Calu3 (cell line): ENCODE measurements at regions of chr7 and their contacts with region 1.

Region 1: DNA sequence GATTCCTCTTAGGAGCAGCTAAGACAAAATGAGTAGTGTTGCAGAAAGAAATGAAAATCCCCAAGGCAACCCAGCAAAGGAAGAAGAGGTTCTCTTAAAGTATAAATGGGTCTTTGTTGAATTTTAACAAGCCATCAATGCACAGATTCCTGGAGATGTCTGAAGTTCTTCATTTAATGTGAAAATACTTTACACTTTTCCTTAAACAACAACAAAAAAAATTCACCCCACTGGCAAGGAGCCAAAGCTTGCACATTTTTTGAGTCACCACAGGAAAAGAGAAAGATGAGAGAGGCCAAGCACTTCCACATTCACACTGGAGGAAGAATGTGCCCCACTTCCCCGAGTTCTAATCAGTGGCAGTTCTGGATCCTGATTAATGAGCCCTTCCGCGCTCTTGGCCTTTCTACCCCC is 286.4 kb upstream of the MEOX2 start:
- DNase-seq: no peak
- H3K4me3 Mint-ChIP-seq: no peak overlapping the region
- H3K27ac Mint-ChIP-seq: no peak overlapping the region
- H3K4me1 Mint-ChIP-seq: no peaks in the 10 kb centered on the region
- H3K27me3 Mint-ChIP-seq: no peaks in the 10 kb centered on the region
- CTCF ChIP-seq: no peak

Region 2: GRCh38 chr7:15836041-15836440 is 136.8 kb before region 1 on chr7:
- CTCF ChIA-PET with region 1: interaction called, 11 read pairs
- intact Hi-C with region 1: no loop called
- DNase-seq: no peak
- H3K4me3 Mint-ChIP-seq: no peak overlapping the region
- H3K27ac Mint-ChIP-seq: no peak overlapping the region
- H3K4me1 Mint-ChIP-seq: peaks cover 9% of the 10 kb centered on the region
- H3K27me3 Mint-ChIP-seq: no peaks in the 10 kb centered on the region
- CTCF ChIP-seq: no peak

Region 3: DNA sequence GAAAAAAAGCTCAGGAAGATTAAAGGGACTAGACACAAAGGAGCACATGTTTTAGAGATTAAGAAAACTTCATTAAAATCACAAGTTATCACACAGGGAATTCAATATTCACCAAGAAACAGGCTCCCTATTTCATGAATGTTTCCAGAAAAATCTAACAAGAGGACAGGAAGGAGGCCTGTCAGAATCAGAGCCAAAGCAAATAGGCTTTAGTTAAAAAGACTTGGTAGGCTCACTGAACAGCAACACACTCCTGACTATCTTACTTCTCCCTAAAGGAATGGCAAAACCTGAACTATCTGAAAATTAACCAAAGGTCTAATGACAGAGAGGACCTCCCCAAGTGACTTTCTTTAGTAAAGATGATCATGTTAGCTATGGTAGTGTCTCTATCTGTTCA is 98.1 kb before region 1 on chr7:
- CTCF ChIA-PET with region 1: no interaction called
- intact Hi-C with region 1: no loop called
- DNase-seq: no peak
- H3K4me3 Mint-ChIP-seq: no peak overlapping the region
- H3K27ac Mint-ChIP-seq: no peak overlapping the region
- H3K4me1 Mint-ChIP-seq: no peaks in the 10 kb centered on the region
- H3K27me3 Mint-ChIP-seq: no peaks in the 10 kb centered on the region
- CTCF ChIP-seq: no peak

Region 4: GRCh38 chr7:16071246-16071857 is 98.5 kb after region 1 on chr7:
- CTCF ChIA-PET with region 1: no interaction called
- intact Hi-C with region 1: no loop called
- DNase-seq: peak; percentile 34
- H3K4me3 Mint-ChIP-seq: no peak overlapping the region
- H3K27ac Mint-ChIP-seq: no peak overlapping the region
- H3K4me1 Mint-ChIP-seq: peaks cover 10% of the 10 kb centered on the region
- H3K27me3 Mint-ChIP-seq: no peaks in the 10 kb centered on the region
- CTCF ChIP-seq: peak; percentile 86

Region 5: DNA sequence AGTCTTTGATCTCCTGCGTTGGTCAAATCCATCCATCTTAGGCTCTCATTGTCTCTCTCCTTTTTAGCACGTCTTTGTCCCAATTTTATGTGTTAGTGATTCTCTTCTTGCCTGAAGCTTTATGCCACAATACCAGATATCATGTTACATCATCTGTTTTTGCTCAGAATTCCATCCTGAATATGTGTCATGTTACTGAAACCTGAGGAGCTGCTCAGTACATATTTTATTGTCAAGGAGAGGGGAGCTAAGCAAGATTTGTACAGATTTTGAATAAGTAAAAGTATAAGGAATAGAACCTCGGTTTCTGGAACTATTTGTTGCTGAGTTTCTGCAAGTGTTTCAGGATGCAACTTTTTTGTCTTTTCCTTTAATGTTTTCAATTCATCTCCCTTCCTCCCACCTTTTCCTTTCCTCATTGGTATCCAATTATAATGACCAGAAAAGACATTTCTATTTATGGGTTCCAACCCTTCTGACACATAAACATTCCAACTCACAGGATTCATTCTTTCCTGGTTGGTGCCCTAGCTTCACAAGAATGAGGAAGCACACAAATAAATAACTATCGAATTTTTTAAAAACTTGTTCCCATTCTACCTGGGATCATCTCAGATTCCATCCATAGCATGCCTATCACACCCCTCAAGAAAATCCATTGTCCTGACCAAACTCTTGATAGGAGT is 156.7 kb after region 1 on chr7:
- CTCF ChIA-PET with region 1: no interaction called
- intact Hi-C with region 1: no loop called
- DNase-seq: peak; percentile 30
- H3K4me3 Mint-ChIP-seq: peak overlapping the region; percentile 3
- H3K27ac Mint-ChIP-seq: peak overlapping the region; percentile 92
- H3K4me1 Mint-ChIP-seq: peaks cover 35% of the 10 kb centered on the region
- H3K27me3 Mint-ChIP-seq: no peaks in the 10 kb centered on the region
- CTCF ChIP-seq: no peak